GM12878 (cell line): ENCODE measurements at regions of chr3 and their contacts with region 1.

Region 1: GRCh38 chr3:120795017-120795648 is 52.6 kb downstream of the GTF2E1 start:
- DNase-seq: peak; percentile 51
- ATAC-seq: peak; percentile 100
- H3K4me3 ChIP-seq: no peak overlapping the region
- H3K27ac ChIP-seq: no peak overlapping the region
- H3K4me1 ChIP-seq: peaks cover 5% of the 10 kb centered on the region
- H3K27me3 ChIP-seq: no peaks in the 10 kb centered on the region
- CTCF ChIP-seq: peak; percentile 78 to 91 (median 88); a peak in 5 of 6 replicates
- EP300 ChIP-seq: no peak
- POLR2A ChIP-seq: no peak
- RAD21 ChIP-seq: peak; percentile 98

Region 2: DNA sequence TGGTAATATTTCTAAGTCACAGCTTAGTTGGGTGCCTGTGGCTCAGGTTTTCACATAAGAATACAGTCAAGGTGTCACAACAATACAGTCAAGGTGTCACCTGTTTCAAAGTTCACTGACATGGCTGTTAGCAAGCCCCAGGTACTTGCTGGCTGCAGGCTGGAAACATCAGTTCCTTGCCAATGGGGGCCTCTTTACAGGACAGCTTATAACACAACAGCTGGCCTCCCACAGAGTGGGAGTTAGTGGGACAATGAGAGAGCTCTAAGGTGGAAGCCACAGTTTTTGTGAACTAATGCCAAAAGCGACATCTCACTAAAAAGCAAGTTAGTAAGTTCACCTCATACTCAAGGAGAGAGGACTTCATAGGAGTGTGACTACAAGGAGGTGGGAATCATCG is 555.5 kb before region 1 on chr3:
- CTCF ChIA-PET with region 1: interaction called, 3 read pairs
- POLR2A ChIA-PET with region 1: no interaction called
- RAD21 ChIA-PET with region 1: no interaction called
- SMC1A ChIA-PET with region 1: interaction called, 3 read pairs
- in situ Hi-C with region 1: loop called (anchors 10 kb)
- intact Hi-C with region 1: loop called (anchors 5 kb)
- DNase-seq: no peak
- ATAC-seq: no peak
- H3K4me3 ChIP-seq: no peak overlapping the region
- H3K27ac ChIP-seq: no peak overlapping the region
- H3K4me1 ChIP-seq: no peaks in the 10 kb centered on the region
- H3K27me3 ChIP-seq: no peaks in the 10 kb centered on the region
- CTCF ChIP-seq: no peak
- EP300 ChIP-seq: no peak
- POLR2A ChIP-seq: no peak
- RAD21 ChIP-seq: no peak

Region 3: DNA sequence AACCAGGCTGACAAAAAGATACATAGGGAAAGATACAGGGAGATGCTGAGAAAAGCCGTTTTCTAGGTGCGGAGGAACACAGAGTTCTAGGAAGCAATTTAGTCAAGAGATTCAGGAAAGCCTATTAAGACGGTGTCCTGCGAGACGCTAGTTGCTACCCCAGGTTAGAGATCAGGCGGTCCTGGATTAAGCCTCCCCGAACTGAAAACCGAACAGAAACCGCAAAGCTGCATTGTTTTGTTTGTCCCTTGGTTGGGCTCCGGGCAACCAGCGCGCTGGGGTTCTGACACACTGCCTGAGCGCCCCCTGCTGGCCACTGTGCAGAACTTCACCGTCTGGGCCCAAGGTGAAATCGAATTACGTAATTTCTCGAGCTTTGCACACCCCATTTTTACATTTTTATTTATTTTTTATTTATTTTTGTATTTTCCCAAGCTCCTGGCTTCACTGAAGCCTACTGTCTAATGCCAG is 236.3 kb before region 1 on chr3:
- CTCF ChIA-PET with region 1: interaction called, 376 read pairs
- POLR2A ChIA-PET with region 1: interaction called, 5 read pairs
- RAD21 ChIA-PET with region 1: interaction called, 70 read pairs
- SMC1A ChIA-PET with region 1: interaction called, 55 read pairs
- in situ Hi-C with region 1: loop called (anchors 5 kb)
- intact Hi-C with region 1: loop called (anchors 1 kb)
- DNase-seq: peak; percentile 33
- ATAC-seq: peak; percentile 93
- H3K4me3 ChIP-seq: peak overlapping the region; percentile 55; the same call in 1 of the 2 replicates
- H3K27ac ChIP-seq: no peak overlapping the region
- H3K4me1 ChIP-seq: peaks cover 3% of the 10 kb centered on the region; the same call in 1 of the 2 replicates
- H3K27me3 ChIP-seq: no peaks in the 10 kb centered on the region
- CTCF ChIP-seq: peak; percentile 88 to 95 (median 95)
- EP300 ChIP-seq: peak in 1 of 2 experiments; percentile 43; a peak in 1 of 4 replicates
- POLR2A ChIP-seq: no peak
- RAD21 ChIP-seq: peak; percentile 84

Region 4: DNA sequence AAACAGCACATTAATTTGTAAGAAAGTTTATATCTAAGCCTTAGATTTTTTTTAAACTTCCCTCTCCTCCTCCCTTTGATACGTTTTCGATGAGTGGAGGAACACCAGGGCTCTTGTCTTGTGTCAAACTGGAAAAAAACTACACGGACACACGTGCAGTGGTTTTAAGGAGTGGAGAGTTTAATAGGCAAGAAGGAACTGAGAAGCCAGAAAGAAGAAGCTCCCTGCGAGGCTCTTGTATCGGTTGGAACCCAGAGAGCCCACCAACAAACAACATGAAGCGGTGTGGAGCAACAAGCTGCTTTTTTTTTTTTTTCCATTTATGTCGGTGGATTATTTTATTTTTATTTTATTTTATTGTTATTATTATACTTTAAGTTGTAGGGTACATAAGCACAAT is 180.4 kb before region 1 on chr3:
- CTCF ChIA-PET with region 1: interaction called, 12 read pairs
- POLR2A ChIA-PET with region 1: no interaction called
- RAD21 ChIA-PET with region 1: interaction called, 3 read pairs
- SMC1A ChIA-PET with region 1: interaction called, 7 read pairs
- in situ Hi-C with region 1: no loop called
- intact Hi-C with region 1: no loop called
- DNase-seq: no peak
- ATAC-seq: no peak
- H3K4me3 ChIP-seq: no peak overlapping the region
- H3K27ac ChIP-seq: no peak overlapping the region
- H3K4me1 ChIP-seq: no peaks in the 10 kb centered on the region
- H3K27me3 ChIP-seq: no peaks in the 10 kb centered on the region
- CTCF ChIP-seq: no peak
- EP300 ChIP-seq: no peak
- POLR2A ChIP-seq: no peak
- RAD21 ChIP-seq: no peak

Region 5: GRCh38 chr3:120678331-120678947 is 116.7 kb before region 1 on chr3:
- CTCF ChIA-PET with region 1: interaction called, 12 read pairs
- POLR2A ChIA-PET with region 1: no interaction called
- RAD21 ChIA-PET with region 1: interaction called, 8 read pairs
- SMC1A ChIA-PET with region 1: interaction called, 7 read pairs
- in situ Hi-C with region 1: no loop called
- intact Hi-C with region 1: no loop called
- DNase-seq: peak; percentile 35
- ATAC-seq: peak; percentile 92
- H3K4me3 ChIP-seq: no peak overlapping the region
- H3K27ac ChIP-seq: peak overlapping the region; percentile 45
- H3K4me1 ChIP-seq: peaks cover 12% of the 10 kb centered on the region; the same call in 1 of the 2 replicates
- H3K27me3 ChIP-seq: no peaks in the 10 kb centered on the region
- CTCF ChIP-seq: no peak
- EP300 ChIP-seq: no peak
- POLR2A ChIP-seq: no peak
- RAD21 ChIP-seq: no peak

Region 6: DNA sequence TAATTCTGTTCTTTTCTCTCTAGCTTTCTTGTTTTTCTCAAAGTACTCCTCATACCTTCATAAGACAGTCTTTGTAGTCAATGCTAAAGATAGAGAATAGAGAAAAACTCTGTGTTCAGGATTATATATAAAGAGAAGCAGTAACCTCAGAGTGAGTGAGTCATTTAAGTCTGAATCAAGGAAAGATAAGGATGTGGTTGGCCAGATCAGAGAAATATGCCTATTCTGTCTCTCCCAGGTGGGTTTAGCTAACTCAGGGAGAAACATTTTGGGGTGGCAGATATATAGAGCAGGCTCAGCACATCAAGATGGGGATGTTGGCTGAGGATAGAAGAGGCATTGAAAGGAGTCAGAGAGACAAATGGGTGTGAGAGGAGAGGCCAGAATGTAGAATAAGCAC is 21.2 kb before region 1 on chr3:
- CTCF ChIA-PET with region 1: interaction called, 14 read pairs
- POLR2A ChIA-PET with region 1: no interaction called
- RAD21 ChIA-PET with region 1: interaction called, 8 read pairs
- SMC1A ChIA-PET with region 1: interaction called, 9 read pairs
- in situ Hi-C with region 1: no loop called
- intact Hi-C with region 1: no loop called
- DNase-seq: no peak
- ATAC-seq: peak; percentile 82
- H3K4me3 ChIP-seq: no peak overlapping the region
- H3K27ac ChIP-seq: no peak overlapping the region
- H3K4me1 ChIP-seq: no peaks in the 10 kb centered on the region
- H3K27me3 ChIP-seq: no peaks in the 10 kb centered on the region
- CTCF ChIP-seq: no peak
- EP300 ChIP-seq: no peak
- POLR2A ChIP-seq: no peak
- RAD21 ChIP-seq: no peak

Region 7: GRCh38 chr3:120956143-120956542 is 161.0 kb after region 1 on chr3:
- CTCF ChIA-PET with region 1: no interaction called
- POLR2A ChIA-PET with region 1: no interaction called
- RAD21 ChIA-PET with region 1: no interaction called
- SMC1A ChIA-PET with region 1: no interaction called
- in situ Hi-C with region 1: no loop called
- intact Hi-C with region 1: no loop called
- DNase-seq: no peak
- ATAC-seq: peak; percentile 34; the same call in 1 of the 3 replicates
- H3K4me3 ChIP-seq: no peak overlapping the region
- H3K27ac ChIP-seq: no peak overlapping the region
- H3K4me1 ChIP-seq: no peaks in the 10 kb centered on the region
- H3K27me3 ChIP-seq: no peaks in the 10 kb centered on the region
- CTCF ChIP-seq: no peak
- EP300 ChIP-seq: no peak
- POLR2A ChIP-seq: no peak
- RAD21 ChIP-seq: no peak